ENCODE measurements at regions of chr22 and their contacts with region 1.

Region 1: GRCh38 chr22:40276996-40277823 is 69.1 kb upstream of the ADSL start:
- DNase-seq: no peak
- H3K4me3 Mint-ChIP-seq: no peak overlapping the region
- H3K27ac Mint-ChIP-seq: peak overlapping the region; percentile 93
- H3K4me1 Mint-ChIP-seq: peaks cover 48% of the 10 kb centered on the region
- H3K27me3 Mint-ChIP-seq: no peaks in the 10 kb centered on the region

Region 2: DNA sequence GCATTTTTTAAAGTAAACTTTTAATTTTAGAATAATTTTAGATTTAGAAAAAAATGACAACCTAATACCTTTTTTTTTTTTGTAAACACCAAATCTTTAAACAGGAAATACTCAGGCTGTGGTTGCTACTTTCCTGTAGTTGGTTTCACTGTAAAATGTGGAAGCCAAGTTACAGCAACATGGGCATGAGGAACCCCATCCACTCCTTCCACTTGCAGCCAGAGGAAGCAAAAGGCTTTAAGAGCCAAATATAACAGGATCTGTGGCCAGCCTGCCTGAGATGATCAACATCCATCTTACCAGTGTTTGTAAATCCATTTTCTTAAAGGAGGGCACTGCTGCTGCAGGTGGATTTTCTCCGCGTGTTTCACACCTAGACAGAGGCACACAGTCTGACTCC is 33.3 kb before region 1 on chr22:
- CTCF ChIA-PET with region 1: no interaction called
- intact Hi-C with region 1: loop called (anchors 5 kb)
- DNase-seq: peak; percentile 23
- H3K4me3 Mint-ChIP-seq: no peak overlapping the region
- H3K27ac Mint-ChIP-seq: peak overlapping the region; percentile 26
- H3K4me1 Mint-ChIP-seq: peaks cover 74% of the 10 kb centered on the region
- H3K27me3 Mint-ChIP-seq: no peaks in the 10 kb centered on the region

Region 3: GRCh38 chr22:40258451-40259046 is 18.7 kb before region 1 on chr22:
- CTCF ChIA-PET with region 1: no interaction called
- intact Hi-C with region 1: loop called (anchors 1 kb)
- DNase-seq: peak; percentile 46
- H3K4me3 Mint-ChIP-seq: no peak overlapping the region
- H3K27ac Mint-ChIP-seq: peak overlapping the region; percentile 66
- H3K4me1 Mint-ChIP-seq: peaks cover 60% of the 10 kb centered on the region
- H3K27me3 Mint-ChIP-seq: no peaks in the 10 kb centered on the region

Region 4: DNA sequence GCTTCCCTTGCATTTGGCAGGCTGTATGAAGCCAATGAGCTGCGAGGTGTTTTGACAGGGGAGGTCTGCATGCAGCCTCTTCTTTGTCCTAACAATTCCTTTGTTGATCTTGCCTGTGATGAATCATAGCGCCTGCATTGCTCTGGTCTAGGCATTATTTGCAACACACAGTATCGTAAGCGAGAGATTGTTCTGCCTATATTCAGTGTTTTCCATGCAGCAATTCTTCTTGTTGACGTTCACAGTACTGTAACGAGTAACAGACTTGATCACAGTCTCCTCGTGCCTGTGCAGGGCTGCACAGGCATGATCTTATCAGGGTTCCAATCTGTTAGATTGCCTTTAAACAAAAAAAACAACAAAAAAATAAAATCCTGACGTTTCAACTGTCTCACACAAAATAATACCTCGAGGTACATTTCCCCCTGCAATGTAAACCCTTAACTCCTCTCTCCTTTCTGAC is 55.1 kb after region 1 on chr22:
- CTCF ChIA-PET with region 1: no interaction called
- intact Hi-C with region 1: loop called (anchors 2 kb)
- DNase-seq: peak; percentile 41
- H3K4me3 Mint-ChIP-seq: peak overlapping the region; percentile 53
- H3K27ac Mint-ChIP-seq: peak overlapping the region; percentile 61
- H3K4me1 Mint-ChIP-seq: peaks cover 82% of the 10 kb centered on the region
- H3K27me3 Mint-ChIP-seq: no peaks in the 10 kb centered on the region

Region 5: DNA sequence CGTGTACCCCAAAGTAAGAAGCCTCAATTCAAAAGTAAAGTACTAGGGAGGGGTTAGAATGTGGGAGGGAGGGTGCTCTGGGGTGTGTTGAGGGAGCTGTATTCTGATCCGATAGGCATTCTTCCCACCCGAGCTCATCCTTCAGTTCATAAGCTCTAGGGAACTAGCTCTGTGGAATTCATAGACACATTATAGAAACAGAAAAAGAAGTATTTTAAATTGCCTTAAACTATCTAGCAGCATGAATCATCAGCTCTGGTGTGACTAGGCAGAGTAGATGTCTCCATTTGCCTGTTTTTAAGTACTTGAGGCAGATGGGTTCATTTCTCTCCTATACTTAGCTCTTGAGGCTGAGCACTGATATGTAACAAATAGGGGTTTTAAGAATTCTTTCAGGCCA is 85.8 kb after region 1 on chr22:
- CTCF ChIA-PET with region 1: no interaction called
- intact Hi-C with region 1: no loop called
- DNase-seq: no peak
- H3K4me3 Mint-ChIP-seq: no peak overlapping the region
- H3K27ac Mint-ChIP-seq: peak overlapping the region; percentile 30
- H3K4me1 Mint-ChIP-seq: no peaks in the 10 kb centered on the region
- H3K27me3 Mint-ChIP-seq: no peaks in the 10 kb centered on the region

Region 6: DNA sequence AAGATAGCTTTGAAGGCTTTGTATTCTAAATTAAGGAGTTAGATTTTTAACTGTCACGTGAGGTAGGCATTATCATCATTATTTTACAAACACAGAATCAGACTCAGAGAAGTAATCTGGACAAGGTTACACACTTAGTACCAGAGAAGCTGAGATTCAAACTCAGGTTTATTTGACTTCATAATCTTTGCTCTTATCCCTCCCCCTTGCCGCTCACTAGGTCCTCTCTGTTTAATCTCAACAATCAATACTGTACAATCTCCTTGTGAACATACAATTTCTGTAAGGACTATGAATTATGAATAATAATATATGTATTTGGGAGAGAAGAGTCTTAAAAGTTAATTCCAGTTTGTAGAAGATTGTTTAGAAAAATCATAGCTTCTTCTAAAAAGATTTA is 589.9 kb after region 1 on chr22:
- CTCF ChIA-PET with region 1: no interaction called
- intact Hi-C with region 1: no loop called
- DNase-seq: no peak
- H3K4me3 Mint-ChIP-seq: no peak overlapping the region
- H3K27ac Mint-ChIP-seq: no peak overlapping the region
- H3K4me1 Mint-ChIP-seq: peaks cover 12% of the 10 kb centered on the region
- H3K27me3 Mint-ChIP-seq: no peaks in the 10 kb centered on the region

Measured in activated naive CD4-positive, alpha-beta T cell treated with anti-CD3 and anti-CD28 coated beads for 36 hours (primary cell).